ENCODE measurements at regions of chr15 and their contacts with region 1.

Region 1: GRCh38 chr15:74937596-74938296 is at the start of gene COX5A:
- DNase-seq: peak; percentile 92 to 95
- ATAC-seq: peak; percentile 96 to 98 (median 98)
- H3K4me3 ChIP-seq: peak within 1 kb of the TSS; percentile 70 to 100 (median 90)
- H3K27ac ChIP-seq: peak within 1 kb of the TSS; percentile 96 to 100 (median 98)
- H3K4me1 ChIP-seq: peaks cover 6 to 46% (median 39%) of the 10 kb centered on the region in 9 donors
- H3K27me3 ChIP-seq: no peaks in the 10 kb centered on the region
- CTCF ChIP-seq: peak in 1 of 9 donors; percentile 19
- total RNA-seq, gene COX5A: 894 to 1,717 (median 1,286) TPM

Region 2: GRCh38 chr15:74906446-74907162 is 31.1 kb before region 1 on chr15 and contains the start of gene FAM219B:
- intact Hi-C with region 1: loop called in 2 of 10 experiments (anchors 2 to 5 kb)
- DNase-seq: peak; percentile 94 to 95
- ATAC-seq: peak; percentile 92 to 97 (median 96)
- H3K4me3 ChIP-seq: peak within 1 kb of the TSS; percentile 66 to 99 (median 86)
- H3K27ac ChIP-seq: peak within 1 kb of the TSS; percentile 91 to 99 (median 96)
- H3K4me1 ChIP-seq: peaks cover 10 to 36% (median 26%) of the 10 kb centered on the region in 9 donors
- H3K27me3 ChIP-seq: no peaks in the 10 kb centered on the region
- CTCF ChIP-seq: no peak
- total RNA-seq, gene FAM219B: 73.1 to 159 (median 98.7) TPM